Panc1 (cell line): ENCODE measurements at regions of chr15 and their contacts with region 1.

Region 1: DNA sequence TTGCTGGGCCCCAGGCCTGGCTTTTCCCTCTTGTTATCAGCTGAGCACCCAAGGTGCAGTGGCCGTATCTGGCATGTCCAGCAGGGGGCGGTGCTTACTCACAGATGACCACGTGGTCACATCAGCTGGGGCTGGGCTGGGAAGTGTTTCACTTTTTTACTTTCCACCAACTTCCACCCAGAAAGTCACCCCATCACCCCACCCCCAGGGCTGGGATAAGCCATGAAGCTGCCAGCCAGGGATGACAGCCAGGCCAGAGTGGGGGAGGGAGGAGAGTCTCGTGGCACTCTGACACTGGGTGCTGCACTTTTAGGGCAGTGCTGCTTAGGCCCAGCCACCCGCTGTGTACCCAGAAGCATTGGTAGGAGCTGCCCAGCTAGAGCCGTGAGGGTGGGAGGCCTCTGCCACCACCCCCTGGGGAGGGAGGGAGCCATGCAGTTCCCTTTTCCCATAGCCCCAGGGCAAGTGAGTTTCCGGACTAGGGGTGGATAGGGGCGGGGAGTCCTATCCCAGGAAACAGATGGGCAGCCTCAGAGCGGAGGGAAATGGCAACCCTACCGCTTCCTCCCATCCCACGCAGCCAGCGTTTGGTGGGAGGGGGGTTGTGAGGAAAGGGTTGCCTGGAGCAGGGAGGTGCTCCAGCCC is 6.1 kb downstream of the PPCDC start:
- DNase-seq: no peak
- ATAC-seq: peak; percentile 90
- H3K4me3 ChIP-seq: no peak overlapping the region
- H3K27ac ChIP-seq: peak overlapping the region; percentile 49
- H3K4me1 ChIP-seq: peaks cover 10% of the 10 kb centered on the region
- H3K27me3 ChIP-seq: no peaks in the 10 kb centered on the region
- CTCF ChIP-seq: peak; percentile 94

Region 2: GRCh38 chr15:75307778-75308391 is 278.4 kb after region 1 on chr15:
- CTCF ChIA-PET with region 1: interaction called, 4 read pairs
- POLR2A ChIA-PET with region 1: no interaction called
- in situ Hi-C with region 1: no loop called
- intact Hi-C with region 1: loop called (anchors 5 kb)
- DNase-seq: peak; percentile 12
- ATAC-seq: peak; percentile 100
- H3K4me3 ChIP-seq: peak overlapping the region in 1 of 2 experiments; percentile 12; a peak in 1 of 4 replicates
- H3K27ac ChIP-seq: no peak overlapping the region
- H3K4me1 ChIP-seq: peaks cover 4% of the 10 kb centered on the region
- H3K27me3 ChIP-seq: peaks cover 5% of the 10 kb centered on the region; the same call in 1 of the 2 replicates
- CTCF ChIP-seq: peak; percentile 87